ENCODE measurements at regions of chr10 and their contacts with region 1.

Region 1: GRCh38 chr10:79407811-79408795 is 37.3 kb downstream of the ZCCHC24 start:
- DNase-seq: peak; percentile 84
- ATAC-seq: peak; percentile 44

Region 2: GRCh38 chr10:79444199-79445119 is 36.4 kb after region 1 on chr10:
- intact Hi-C with region 1: loop called (anchors 5 kb)
- DNase-seq: peak; percentile 83
- ATAC-seq: peak; percentile 57

Measured in sciatic nerve (tissue), 2 donors.